AG04449 (cell line): ENCODE measurements at regions of chr3 and their contacts with region 1.

Region 1: GRCh38 chr3:98039322-98040024 is 4.4 kb upstream of the GABRR3 start:
- DNase-seq: peak; percentile 56
- H3K4me3 ChIP-seq: peak overlapping the region; percentile 59
- CTCF ChIP-seq: peak; percentile 81

Region 2: GRCh38 chr3:98056035-98056434 is 16.6 kb after region 1 on chr3:
- CTCF ChIA-PET with region 1: interaction called, 12 read pairs
- POLR2A ChIA-PET with region 1: no interaction called
- DNase-seq: no peak
- H3K4me3 ChIP-seq: no peak overlapping the region
- CTCF ChIP-seq: no peak